HepG2 (cell line): ENCODE measurements at regions of chr20 and their contacts with region 1.

Region 1: GRCh38 chr20:5586720-5587119 is 163.5 kb upstream of the SHLD1 start:
- DNase-seq: no peak
- ATAC-seq: no peak
- H3K4me3 ChIP-seq: no peak overlapping the region
- H3K27ac ChIP-seq: no peak overlapping the region
- H3K4me1 ChIP-seq: no peaks in the 10 kb centered on the region
- H3K27me3 ChIP-seq: no peaks in the 10 kb centered on the region
- CTCF ChIP-seq: no peak
- EP300 ChIP-seq: no peak
- POLR2A ChIP-seq: no peak
- RAD21 ChIP-seq: no peak

Region 2: DNA sequence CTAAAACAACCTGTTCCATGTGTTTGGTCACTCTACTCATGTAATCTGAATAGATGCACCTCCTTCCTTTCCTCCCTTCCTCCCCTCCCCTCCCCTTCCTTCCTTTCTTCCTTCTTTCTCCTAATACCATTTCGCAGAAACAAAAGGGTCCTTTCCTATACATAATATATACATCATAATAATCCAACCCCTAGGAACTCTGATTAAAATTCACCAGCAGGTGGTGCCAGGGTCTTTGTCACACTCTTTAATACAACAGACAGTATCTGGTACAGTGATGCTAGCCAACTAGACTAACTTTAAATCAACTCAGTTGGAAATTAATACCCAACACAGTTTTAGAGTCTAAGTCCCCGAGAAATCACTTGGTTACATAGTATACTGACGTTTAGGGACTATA is 17.7 kb before region 1 on chr20:
- CTCF ChIA-PET with region 1: no interaction called
- POLR2A ChIA-PET with region 1: no interaction called
- in situ Hi-C with region 1: no loop called
- intact Hi-C with region 1: loop called (anchors 2 kb)
- DNase-seq: peak; percentile 71
- ATAC-seq: peak; percentile 94
- H3K4me3 ChIP-seq: no peak overlapping the region
- H3K27ac ChIP-seq: no peak overlapping the region
- H3K4me1 ChIP-seq: no peaks in the 10 kb centered on the region
- H3K27me3 ChIP-seq: no peaks in the 10 kb centered on the region
- CTCF ChIP-seq: peak; percentile 73
- EP300 ChIP-seq: no peak
- POLR2A ChIP-seq: no peak
- RAD21 ChIP-seq: peak; percentile 69

Region 3: GRCh38 chr20:5691918-5692618 is 105.3 kb after region 1 on chr20:
- CTCF ChIA-PET with region 1: no interaction called
- POLR2A ChIA-PET with region 1: no interaction called
- in situ Hi-C with region 1: no loop called
- intact Hi-C with region 1: no loop called
- DNase-seq: peak; percentile 35
- ATAC-seq: peak; percentile 23; the same call in 1 of the 3 replicates
- H3K4me3 ChIP-seq: no peak overlapping the region
- H3K27ac ChIP-seq: no peak overlapping the region
- H3K4me1 ChIP-seq: peaks cover 59% of the 10 kb centered on the region
- H3K27me3 ChIP-seq: peaks cover 0 to 9% of the 10 kb centered on the region in 2 experiments; a peak in 1 of 5 replicates
- CTCF ChIP-seq: no peak
- EP300 ChIP-seq: no peak
- POLR2A ChIP-seq: no peak
- RAD21 ChIP-seq: no peak